Activated B cell treated with CpG ODN at 0.5 μM for 24 hours (primary cell): ENCODE measurements at regions of chr7 and their contacts with region 1.

Region 1: GRCh38 chr7:139109188-139109982 is at the start of gene ZC3HAV1:
- DNase-seq: peak; percentile 73
- ATAC-seq: peak; percentile 76
- H3K4me3 Mint-ChIP-seq: peak within 1 kb of the TSS; percentile 90
- H3K27ac Mint-ChIP-seq: peak within 1 kb of the TSS; percentile 97
- H3K4me1 Mint-ChIP-seq: peaks cover 44% of the 10 kb centered on the region
- H3K27me3 Mint-ChIP-seq: no peaks in the 10 kb centered on the region
- CTCF ChIP-seq: no peak
- total RNA-seq, gene ZC3HAV1: 76.3 and 80.7 TPM in 2 replicates

Region 2: GRCh38 chr7:138459413-138460175 is 649.8 kb before region 1 on chr7:
- CTCF ChIA-PET with region 1: no interaction called
- POLR2A ChIA-PET with region 1: no interaction called
- intact Hi-C with region 1: loop called (anchors 5 kb)
- DNase-seq: peak; percentile 96
- ATAC-seq: peak; percentile 88
- H3K4me3 Mint-ChIP-seq: peak overlapping the region; percentile 91
- H3K27ac Mint-ChIP-seq: peak overlapping the region; percentile 86
- H3K4me1 Mint-ChIP-seq: peaks cover 22% of the 10 kb centered on the region
- H3K27me3 Mint-ChIP-seq: no peaks in the 10 kb centered on the region
- CTCF ChIP-seq: no peak

Region 3: DNA sequence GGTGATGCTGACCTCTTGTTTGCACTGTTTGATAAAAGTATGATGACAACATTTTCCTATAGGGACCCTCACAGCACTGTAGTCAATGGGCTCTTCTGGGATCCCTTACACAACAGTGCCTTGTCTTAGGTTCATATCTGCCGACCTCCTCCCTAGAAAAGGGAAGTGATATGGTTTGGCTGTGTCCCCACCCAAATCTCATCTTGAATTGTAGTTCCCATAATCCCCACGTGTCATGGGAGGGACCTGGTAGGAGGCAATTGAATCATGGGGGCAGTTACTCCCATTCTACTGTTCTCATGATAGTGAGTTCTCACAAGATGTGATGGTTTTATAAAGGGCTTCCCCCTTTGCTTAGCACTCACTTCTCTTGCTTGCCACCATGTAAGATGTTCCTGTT is 22.9 kb before region 1 on chr7:
- CTCF ChIA-PET with region 1: no interaction called
- POLR2A ChIA-PET with region 1: interaction called, 10 read pairs
- intact Hi-C with region 1: no loop called
- DNase-seq: no peak
- ATAC-seq: no peak
- H3K4me3 Mint-ChIP-seq: no peak overlapping the region
- H3K27ac Mint-ChIP-seq: peak overlapping the region; percentile 3
- H3K4me1 Mint-ChIP-seq: peaks cover 29% of the 10 kb centered on the region
- H3K27me3 Mint-ChIP-seq: no peaks in the 10 kb centered on the region
- CTCF ChIP-seq: no peak

Region 4: DNA sequence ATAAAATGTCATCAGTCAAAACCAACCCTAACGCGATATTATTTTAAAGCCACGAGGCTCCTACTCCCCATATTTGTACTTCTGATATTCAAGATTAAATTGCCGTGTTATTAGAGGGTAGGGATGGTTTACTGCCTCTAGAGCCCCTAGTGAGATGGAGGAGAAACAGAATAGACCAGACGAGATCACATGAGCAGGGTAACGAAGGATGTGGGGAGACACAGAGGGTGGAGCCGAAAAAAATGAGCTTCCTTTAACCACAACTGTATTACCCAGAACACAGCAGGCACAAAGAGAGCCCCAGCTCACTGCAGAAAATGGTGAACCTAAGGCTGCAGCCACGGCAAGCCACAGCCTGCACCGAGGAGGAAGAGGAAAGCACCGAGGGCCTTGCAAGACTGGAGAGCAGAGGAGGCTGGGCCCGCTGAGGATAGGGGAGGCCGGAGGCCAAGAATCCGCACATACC is 14.2 kb before region 1 on chr7:
- CTCF ChIA-PET with region 1: no interaction called
- POLR2A ChIA-PET with region 1: interaction called, 54 read pairs
- intact Hi-C with region 1: loop called (anchors 1 kb)
- DNase-seq: peak; percentile 44
- ATAC-seq: peak; percentile 96
- H3K4me3 Mint-ChIP-seq: peak overlapping the region; percentile 63
- H3K27ac Mint-ChIP-seq: peak overlapping the region; percentile 94
- H3K4me1 Mint-ChIP-seq: peaks cover 78% of the 10 kb centered on the region
- H3K27me3 Mint-ChIP-seq: no peaks in the 10 kb centered on the region
- CTCF ChIP-seq: no peak

Region 5: DNA sequence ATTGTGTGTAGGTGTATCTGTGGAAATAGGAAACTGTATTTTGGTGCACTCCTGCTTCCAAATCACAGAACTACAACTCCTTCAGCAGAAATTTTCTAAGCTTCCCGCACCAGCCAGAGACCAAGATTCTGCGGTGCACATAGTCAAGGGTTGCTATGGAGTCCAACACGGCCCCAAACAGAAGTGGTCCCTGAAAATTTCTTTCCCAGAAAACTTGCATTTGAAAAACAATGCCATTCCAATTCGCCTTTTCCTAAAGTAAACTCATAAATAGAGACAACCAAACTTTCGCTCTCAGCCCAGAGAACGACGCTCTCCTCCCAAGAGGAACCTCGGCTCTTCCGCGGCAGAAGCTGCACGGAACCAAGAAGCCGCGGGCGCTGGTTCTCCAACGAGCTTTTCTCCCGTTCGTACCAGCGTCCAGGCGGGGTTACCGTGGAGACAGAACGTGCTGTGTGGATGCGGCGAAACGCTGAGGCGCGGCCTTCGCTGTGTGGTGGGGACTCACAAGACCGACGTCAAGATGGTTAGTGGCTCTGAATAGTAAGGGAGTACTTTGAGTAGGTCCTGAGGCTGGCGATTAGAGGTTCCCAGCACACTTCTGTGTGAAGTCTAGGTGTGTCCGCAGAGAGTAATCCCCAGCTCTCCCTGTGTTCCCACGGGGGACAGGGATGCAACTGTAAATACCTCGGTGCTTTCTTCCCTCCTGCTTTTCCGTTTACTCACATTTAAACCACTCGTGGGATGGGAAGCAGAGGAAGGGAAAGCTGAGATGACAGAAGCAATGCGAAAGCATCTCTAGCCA is 24.2 kb after region 1 on chr7:
- CTCF ChIA-PET with region 1: interaction called, 4 read pairs
- POLR2A ChIA-PET with region 1: interaction called, 15 read pairs
- intact Hi-C with region 1: loop called (anchors 1 kb)
- DNase-seq: peak; percentile 77
- ATAC-seq: peak; percentile 98
- H3K4me3 Mint-ChIP-seq: peak overlapping the region; percentile 87
- H3K27ac Mint-ChIP-seq: peak overlapping the region; percentile 81
- H3K4me1 Mint-ChIP-seq: peaks cover 9% of the 10 kb centered on the region
- H3K27me3 Mint-ChIP-seq: no peaks in the 10 kb centered on the region
- CTCF ChIP-seq: no peak

Region 6: GRCh38 chr7:139359366-139360209 is 250.2 kb after region 1 on chr7 and contains the start of gene LUC7L2:
- CTCF ChIA-PET with region 1: no interaction called
- POLR2A ChIA-PET with region 1: interaction called, 15 read pairs
- intact Hi-C with region 1: loop called (anchors 1 kb)
- DNase-seq: peak; percentile 97
- ATAC-seq: peak; percentile 78
- H3K4me3 Mint-ChIP-seq: peak within 1 kb of the TSS; percentile 98
- H3K27ac Mint-ChIP-seq: peak within 1 kb of the TSS; percentile 100
- H3K4me1 Mint-ChIP-seq: peaks cover 41% of the 10 kb centered on the region
- H3K27me3 Mint-ChIP-seq: no peaks in the 10 kb centered on the region
- CTCF ChIP-seq: no peak
- total RNA-seq, gene LUC7L2: 94.0 and 118 TPM in 2 replicates